IMR-90 (cell line): ENCODE measurements at regions of chr12 and their contacts with region 1.

Region 1: DNA sequence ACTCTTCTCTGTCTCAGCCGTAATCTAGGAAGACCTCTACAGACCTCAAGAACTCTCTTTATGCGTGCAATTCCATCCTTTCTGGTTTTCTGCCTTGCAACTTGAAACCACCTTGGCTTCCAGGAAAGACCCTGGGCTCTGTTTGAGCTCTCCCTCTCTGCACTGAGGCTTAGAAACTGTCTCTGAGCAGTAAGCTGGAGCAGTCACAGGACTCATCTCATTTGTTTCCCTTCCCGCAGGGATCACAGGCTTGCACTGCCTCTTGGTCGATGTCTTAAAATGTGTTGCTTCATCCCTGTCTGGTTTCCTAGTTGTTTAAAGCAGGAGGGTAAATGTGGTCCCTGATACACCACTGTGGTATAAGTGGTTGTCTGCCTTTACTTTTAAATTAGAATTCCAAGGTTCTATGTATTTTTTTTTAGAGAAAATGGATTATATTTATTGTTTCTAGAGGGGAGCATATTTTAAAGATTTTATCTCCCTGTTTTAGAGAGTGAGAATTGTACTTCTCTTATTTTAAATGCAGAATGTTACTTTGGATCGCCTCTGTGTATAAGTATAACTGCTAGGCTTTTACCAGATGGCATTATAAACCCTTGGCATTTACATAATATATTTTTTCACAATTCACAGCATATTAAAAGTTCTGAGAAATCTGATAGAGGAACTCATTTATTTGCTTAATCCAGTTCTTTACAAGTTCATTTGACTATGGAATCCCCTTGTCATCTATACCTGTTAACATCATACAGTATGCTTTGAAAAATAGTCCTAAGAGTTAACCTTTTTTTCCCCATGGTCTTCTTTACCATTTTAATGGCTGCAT is 26.4 kb downstream of the EID3 start:
- DNase-seq: no peak
- ATAC-seq: peak; percentile 11; the same call in 1 of the 2 replicates
- H3K4me3 ChIP-seq: no peak overlapping the region
- H3K27ac ChIP-seq: no peak overlapping the region
- H3K4me1 ChIP-seq: peaks cover 2% of the 10 kb centered on the region; the same call in 1 of the 2 replicates
- H3K27me3 ChIP-seq: no peaks in the 10 kb centered on the region
- CTCF ChIP-seq: no peak
- POLR2A ChIP-seq: no peak
- RAD21 ChIP-seq: no peak

Region 2: GRCh38 chr12:103947871-103948555 is 381.9 kb before region 1 on chr12:
- CTCF ChIA-PET with region 1: no interaction called
- POLR2A ChIA-PET with region 1: no interaction called
- dilution Hi-C with region 1: no loop called
- in situ Hi-C with region 1: no loop called
- intact Hi-C with region 1: loop called (anchors 10 kb)
- DNase-seq: no peak
- ATAC-seq: no peak
- H3K4me3 ChIP-seq: no peak overlapping the region
- H3K27ac ChIP-seq: no peak overlapping the region
- H3K4me1 ChIP-seq: no peaks in the 10 kb centered on the region
- H3K27me3 ChIP-seq: no peaks in the 10 kb centered on the region
- CTCF ChIP-seq: no peak
- POLR2A ChIP-seq: no peak
- RAD21 ChIP-seq: no peak